ENCODE measurements at regions of chr7 and their contacts with region 1.

Region 1: GRCh38 chr7:19713676-19714075 is 4.8 kb upstream of the POLR1F start:
- DNase-seq: peak; percentile 62
- H3K4me3 ChIP-seq: no peak overlapping the region
- H3K27ac ChIP-seq: no peak overlapping the region
- H3K4me1 ChIP-seq: no peaks in the 10 kb centered on the region
- H3K27me3 ChIP-seq: peaks cover 10 to 29% of the 10 kb centered on the region in 2 experiments
- CTCF ChIP-seq: peak; percentile 20 to 39
- POLR2A ChIP-seq: no peak

Region 2: DNA sequence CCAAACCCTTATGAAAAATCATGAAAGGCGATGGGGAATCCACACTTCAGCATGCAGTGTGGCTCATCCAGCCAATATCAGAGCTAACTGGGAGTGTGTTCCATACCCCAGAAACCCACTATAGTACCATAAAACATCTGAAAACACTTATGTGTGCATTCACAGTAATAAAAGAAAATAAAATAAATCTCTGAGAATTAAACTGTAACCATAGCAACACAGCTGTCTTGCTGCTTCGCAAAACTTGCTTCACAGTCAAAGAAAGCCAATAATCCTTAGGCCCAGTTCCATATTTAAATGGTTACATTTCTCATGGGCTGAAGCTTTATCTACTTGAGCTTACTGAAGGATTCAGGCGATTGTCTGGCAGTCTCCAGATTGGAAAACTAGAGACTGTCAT is 15.0 kb after region 1 on chr7:
- CTCF ChIA-PET with region 1: interaction called, 23 read pairs
- POLR2A ChIA-PET with region 1: interaction called, 4 read pairs
- dilution Hi-C with region 1: no loop called
- intact Hi-C with region 1: no loop called
- DNase-seq: no peak
- H3K4me3 ChIP-seq: no peak overlapping the region
- H3K27ac ChIP-seq: no peak overlapping the region
- H3K4me1 ChIP-seq: no peaks in the 10 kb centered on the region
- H3K27me3 ChIP-seq: peaks cover 0 to 22% of the 10 kb centered on the region in 2 experiments
- CTCF ChIP-seq: no peak
- POLR2A ChIP-seq: no peak

Region 3: GRCh38 chr7:19899529-19899928 is 185.9 kb after region 1 on chr7:
- CTCF ChIA-PET with region 1: no interaction called
- POLR2A ChIA-PET with region 1: no interaction called
- dilution Hi-C with region 1: no loop called
- intact Hi-C with region 1: no loop called
- DNase-seq: no peak
- H3K4me3 ChIP-seq: no peak overlapping the region
- H3K27ac ChIP-seq: no peak overlapping the region
- H3K4me1 ChIP-seq: no peaks in the 10 kb centered on the region
- H3K27me3 ChIP-seq: no peaks in the 10 kb centered on the region
- CTCF ChIP-seq: no peak
- POLR2A ChIP-seq: no peak

Region 4: GRCh38 chr7:20172736-20173334 is 459.2 kb after region 1 on chr7:
- CTCF ChIA-PET with region 1: interaction called, 13 read pairs
- POLR2A ChIA-PET with region 1: no interaction called
- dilution Hi-C with region 1: no loop called
- intact Hi-C with region 1: no loop called
- DNase-seq: peak; percentile 51
- H3K4me3 ChIP-seq: no peak overlapping the region
- H3K27ac ChIP-seq: no peak overlapping the region
- H3K4me1 ChIP-seq: no peaks in the 10 kb centered on the region
- H3K27me3 ChIP-seq: no peaks in the 10 kb centered on the region
- CTCF ChIP-seq: peak; percentile 55 to 66
- POLR2A ChIP-seq: no peak